Activated naive CD4-positive, alpha-beta T cell treated with anti-CD3 and anti-CD28 coated beads for 36 hours (primary cell): ENCODE measurements at regions of chr13 and their contacts with region 1.

Region 1: DNA sequence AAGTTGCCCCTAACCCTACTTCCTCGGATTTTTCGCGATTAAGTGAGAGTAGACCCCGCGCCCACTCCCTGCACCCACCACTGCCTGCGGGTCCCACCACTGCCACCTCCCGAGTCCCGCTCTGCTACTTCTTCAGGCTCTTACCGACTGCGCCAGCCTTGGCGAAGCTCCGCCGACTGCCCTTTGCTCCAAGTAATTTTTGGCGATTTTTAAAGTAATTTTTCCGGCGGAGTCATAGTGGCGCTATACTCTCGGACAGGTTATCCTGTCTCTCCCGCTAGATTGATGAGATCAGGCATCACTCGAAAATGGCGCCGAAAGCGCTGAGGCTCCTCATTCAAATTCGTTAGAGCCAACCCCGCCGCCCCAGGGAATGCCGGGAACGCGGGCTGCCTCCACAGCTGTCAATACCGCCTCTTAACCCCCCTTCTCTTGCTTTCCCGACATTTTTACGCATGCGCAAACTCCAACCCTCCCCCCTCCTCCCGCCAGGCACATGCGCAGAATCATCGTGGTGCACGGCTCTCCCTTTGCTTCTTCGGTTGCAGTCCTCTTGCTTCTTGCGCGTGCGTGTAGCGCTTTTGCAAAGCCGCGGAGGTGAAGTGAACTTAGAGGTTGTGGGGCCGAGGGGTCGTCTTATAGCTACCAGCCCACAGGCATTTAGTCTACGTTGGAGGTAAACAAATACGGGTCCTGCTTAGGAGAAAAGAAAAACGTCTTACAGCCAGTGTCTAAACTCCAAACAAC is 66.6 kb downstream of the KCNRG start:
- DNase-seq: peak; percentile 99
- H3K4me3 Mint-ChIP-seq: peak overlapping the region; percentile 100
- H3K27ac Mint-ChIP-seq: peak overlapping the region; percentile 100
- H3K4me1 Mint-ChIP-seq: peaks cover 27% of the 10 kb centered on the region
- H3K27me3 Mint-ChIP-seq: peaks cover 15% of the 10 kb centered on the region

Region 2: DNA sequence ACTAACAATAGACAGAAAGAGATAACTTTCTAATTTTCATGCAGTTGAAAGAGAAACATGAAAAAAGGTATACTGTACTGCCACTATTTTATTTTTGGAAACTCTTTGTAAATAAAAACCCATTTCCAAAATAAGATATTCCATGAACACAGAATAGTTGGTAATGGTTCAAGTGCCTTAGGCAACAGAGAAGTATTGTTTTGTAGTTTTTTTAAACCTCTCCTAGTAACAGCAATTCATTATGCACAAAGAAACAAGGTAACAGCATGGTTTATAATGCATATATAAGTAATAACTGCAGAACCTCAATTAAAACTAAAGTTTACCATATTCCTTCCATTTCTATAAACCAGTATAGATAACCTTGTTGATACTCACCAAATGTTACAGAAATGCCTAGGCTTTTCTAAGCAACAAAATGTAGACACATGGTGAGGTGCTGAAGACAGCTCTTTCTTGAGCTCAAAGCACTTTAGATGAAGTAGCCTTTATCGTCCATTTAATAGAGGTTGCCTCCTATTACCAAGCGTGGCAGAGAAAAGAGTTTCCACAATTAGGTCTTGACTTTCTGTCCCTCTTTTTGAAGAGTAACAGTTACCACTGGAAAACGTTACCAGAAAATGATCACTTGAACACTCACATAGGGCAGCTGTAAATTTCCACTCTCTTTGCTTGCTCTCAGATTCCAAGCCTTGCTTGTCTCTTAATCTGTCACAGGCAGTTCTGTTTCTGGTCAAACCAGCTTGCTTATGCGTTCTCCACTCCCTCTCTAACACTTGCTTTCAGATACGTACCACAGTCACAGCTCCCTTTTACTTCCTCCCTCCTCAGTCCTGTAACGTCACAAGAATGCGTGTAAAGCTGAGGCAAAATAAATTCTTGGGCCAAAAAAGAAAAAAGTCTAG is 680.8 kb before region 1 on chr13:
- CTCF ChIA-PET with region 1: no interaction called
- intact Hi-C with region 1: no loop called
- DNase-seq: peak; percentile 5
- H3K4me3 Mint-ChIP-seq: no peak overlapping the region
- H3K27ac Mint-ChIP-seq: no peak overlapping the region
- H3K4me1 Mint-ChIP-seq: peaks cover 3% of the 10 kb centered on the region
- H3K27me3 Mint-ChIP-seq: no peaks in the 10 kb centered on the region

Region 3: DNA sequence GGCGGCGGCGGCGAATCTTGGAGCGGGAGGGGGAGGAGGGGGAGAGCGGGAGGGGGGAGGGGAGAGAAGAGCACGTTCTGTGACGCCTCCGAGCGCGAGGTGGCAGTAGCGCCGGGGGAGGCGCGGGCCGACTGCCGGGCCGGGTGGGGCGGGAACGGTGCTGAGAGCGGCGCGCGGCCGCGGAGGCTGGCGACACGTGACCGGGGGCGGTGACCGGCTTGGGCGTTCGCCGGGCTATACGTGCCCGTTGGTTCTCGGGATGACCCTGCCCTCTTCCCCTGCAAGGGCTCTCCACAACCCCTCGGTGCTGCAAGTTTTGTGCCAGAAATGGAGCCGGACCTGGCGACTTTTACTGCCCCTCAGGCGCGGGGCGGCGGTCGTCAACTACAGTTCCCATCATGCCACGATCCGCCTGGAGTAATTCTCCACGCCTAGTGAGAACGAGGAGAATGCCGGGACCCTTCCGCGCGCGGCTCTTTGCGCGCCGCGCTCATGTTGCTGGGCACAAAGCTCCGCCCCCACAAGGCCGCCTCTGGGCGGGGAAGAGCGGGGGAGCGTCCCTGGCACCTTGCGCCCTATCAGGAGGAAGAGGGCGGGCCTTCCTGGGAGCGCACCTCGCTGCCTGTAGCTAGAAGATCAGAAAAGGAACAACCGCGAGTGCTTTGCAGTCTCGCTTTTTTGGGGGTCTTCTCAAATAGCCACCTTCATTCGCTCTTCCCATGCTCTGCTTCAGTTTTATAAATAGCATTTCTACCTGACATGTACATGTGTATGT is 289.1 kb before region 1 on chr13 and contains the start of gene KPNA3:
- CTCF ChIA-PET with region 1: no interaction called
- intact Hi-C with region 1: loop called (anchors 2 kb)
- DNase-seq: peak; percentile 96
- H3K4me3 Mint-ChIP-seq: peak within 1 kb of the TSS; percentile 92
- H3K27ac Mint-ChIP-seq: peak within 1 kb of the TSS; percentile 94
- H3K4me1 Mint-ChIP-seq: peaks cover 29% of the 10 kb centered on the region
- H3K27me3 Mint-ChIP-seq: peaks cover 4% of the 10 kb centered on the region
- total RNA-seq, gene KPNA3: 47.9 to 50.7 TPM

Region 4: DNA sequence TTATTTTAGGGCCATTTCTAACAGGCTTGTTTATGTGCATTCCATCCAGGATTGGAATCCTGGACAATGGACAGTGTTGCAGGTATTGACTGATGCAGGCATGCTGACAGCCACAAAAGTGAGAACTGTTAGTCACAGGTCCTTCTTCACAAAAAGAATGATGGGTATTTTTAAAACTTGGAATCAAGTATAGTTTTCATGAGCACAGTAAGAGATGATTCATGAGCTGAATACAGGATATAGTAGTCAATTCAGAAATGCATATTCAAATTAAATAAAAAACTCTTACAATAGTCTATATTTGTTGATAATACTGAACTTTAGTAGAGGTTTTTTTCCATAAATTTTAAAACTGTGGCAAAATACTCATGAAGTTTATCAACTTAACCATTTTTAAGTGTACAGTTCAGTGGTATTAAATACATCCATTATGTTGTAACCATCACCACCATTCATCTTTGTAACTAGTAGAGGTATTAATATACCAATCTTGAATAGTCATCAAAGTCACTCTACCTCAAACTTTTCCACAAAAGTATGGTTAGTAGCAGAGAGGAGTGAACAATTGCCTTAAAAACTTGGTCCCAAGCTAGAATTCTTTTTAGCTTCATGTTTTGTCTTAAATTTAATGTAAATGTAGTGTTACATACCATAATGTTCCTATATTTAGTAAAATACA is 12.9 kb after region 1 on chr13:
- CTCF ChIA-PET with region 1: interaction called, 22 read pairs
- intact Hi-C with region 1: loop called (anchors 1 kb)
- DNase-seq: peak; percentile 42
- H3K4me3 Mint-ChIP-seq: no peak overlapping the region
- H3K27ac Mint-ChIP-seq: no peak overlapping the region
- H3K4me1 Mint-ChIP-seq: peaks cover 30% of the 10 kb centered on the region
- H3K27me3 Mint-ChIP-seq: no peaks in the 10 kb centered on the region

Region 5: GRCh38 chr13:50170447-50171037 is 88.7 kb after region 1 on chr13:
- CTCF ChIA-PET with region 1: no interaction called
- intact Hi-C with region 1: loop called (anchors 1 kb)
- DNase-seq: no peak
- H3K4me3 Mint-ChIP-seq: no peak overlapping the region
- H3K27ac Mint-ChIP-seq: no peak overlapping the region
- H3K4me1 Mint-ChIP-seq: peaks cover 18% of the 10 kb centered on the region
- H3K27me3 Mint-ChIP-seq: peaks cover 6% of the 10 kb centered on the region

Region 6: GRCh38 chr13:50365408-50366391 is 283.8 kb after region 1 on chr13:
- CTCF ChIA-PET with region 1: interaction called, 4 read pairs
- intact Hi-C with region 1: loop called (anchors 2 kb)
- DNase-seq: peak; percentile 62
- H3K4me3 Mint-ChIP-seq: no peak overlapping the region
- H3K27ac Mint-ChIP-seq: no peak overlapping the region
- H3K4me1 Mint-ChIP-seq: peaks cover 38% of the 10 kb centered on the region
- H3K27me3 Mint-ChIP-seq: peaks cover 12% of the 10 kb centered on the region

Region 7: GRCh38 chr13:50801087-50801931 is 719.5 kb after region 1 on chr13:
- CTCF ChIA-PET with region 1: interaction called, 3 read pairs
- intact Hi-C with region 1: loop called (anchors 2 kb)
- DNase-seq: peak; percentile 80
- H3K4me3 Mint-ChIP-seq: no peak overlapping the region
- H3K27ac Mint-ChIP-seq: no peak overlapping the region
- H3K4me1 Mint-ChIP-seq: peaks cover 5% of the 10 kb centered on the region
- H3K27me3 Mint-ChIP-seq: no peaks in the 10 kb centered on the region

Region 8: GRCh38 chr13:51070005-51070649 is 988.3 kb after region 1 on chr13:
- CTCF ChIA-PET with region 1: no interaction called
- intact Hi-C with region 1: loop called (anchors 2 kb)
- DNase-seq: peak; percentile 88
- H3K4me3 Mint-ChIP-seq: no peak overlapping the region
- H3K27ac Mint-ChIP-seq: no peak overlapping the region
- H3K4me1 Mint-ChIP-seq: peaks cover 3% of the 10 kb centered on the region
- H3K27me3 Mint-ChIP-seq: peaks cover 3% of the 10 kb centered on the region